PC-9 (cell line): ENCODE measurements at regions of chr15 and their contacts with region 1.

Region 1: GRCh38 chr15:57611938-57612337 is 20.2 kb downstream of the MYZAP start:
- DNase-seq: peak; percentile 81 to 87
- H3K4me3 ChIP-seq: no peak overlapping the region
- H3K27ac ChIP-seq: peak overlapping the region; percentile 85
- H3K4me1 ChIP-seq: peaks cover 36% of the 10 kb centered on the region
- H3K27me3 ChIP-seq: no peaks in the 10 kb centered on the region
- CTCF ChIP-seq: peak; percentile 68

Region 2: GRCh38 chr15:57340682-57341259 is 271.2 kb before region 1 on chr15:
- CTCF ChIA-PET with region 1: no interaction called
- POLR2A ChIA-PET with region 1: no interaction called
- intact Hi-C with region 1: loop called (anchors 5 kb)
- DNase-seq: peak; percentile 46 to 50
- H3K4me3 ChIP-seq: no peak overlapping the region
- H3K27ac ChIP-seq: no peak overlapping the region
- H3K4me1 ChIP-seq: no peaks in the 10 kb centered on the region
- H3K27me3 ChIP-seq: no peaks in the 10 kb centered on the region
- CTCF ChIP-seq: peak; percentile 87

Region 3: DNA sequence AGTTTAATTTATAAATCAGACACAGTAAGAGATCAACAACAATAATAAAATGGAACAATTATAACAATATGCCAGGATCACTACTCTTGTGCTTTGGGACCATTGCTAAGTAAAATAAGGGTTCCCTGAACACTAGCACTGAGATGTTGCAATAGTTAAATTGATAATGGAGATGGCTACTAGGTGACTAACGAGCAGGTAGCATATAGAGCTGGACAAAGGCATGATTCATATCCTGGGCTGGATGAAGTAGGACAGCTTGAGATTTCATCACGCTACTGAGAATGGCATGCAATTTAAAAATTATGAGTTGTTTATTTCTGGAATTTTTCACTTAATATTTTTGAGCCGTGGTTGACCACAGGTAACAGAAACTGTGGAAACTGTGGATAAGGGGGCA is 40.9 kb before region 1 on chr15:
- CTCF ChIA-PET with region 1: interaction called, 7 read pairs
- POLR2A ChIA-PET with region 1: no interaction called
- intact Hi-C with region 1: loop called (anchors 1 kb)
- DNase-seq: peak; percentile 23 to 90
- H3K4me3 ChIP-seq: no peak overlapping the region
- H3K27ac ChIP-seq: peak overlapping the region; percentile 97
- H3K4me1 ChIP-seq: peaks cover 26% of the 10 kb centered on the region
- H3K27me3 ChIP-seq: no peaks in the 10 kb centered on the region
- CTCF ChIP-seq: no peak

Region 4: GRCh38 chr15:57591646-57592367 is 20.1 kb before region 1 on chr15 and contains the start of gene MYZAP:
- CTCF ChIA-PET with region 1: no interaction called
- POLR2A ChIA-PET with region 1: interaction called, 4 read pairs
- intact Hi-C with region 1: loop called (anchors 1 kb)
- DNase-seq: peak; percentile 48 to 80
- H3K4me3 ChIP-seq: peak within 1 kb of the TSS; percentile 78
- H3K27ac ChIP-seq: peak within 1 kb of the TSS; percentile 90
- H3K4me1 ChIP-seq: peaks cover 72% of the 10 kb centered on the region
- H3K27me3 ChIP-seq: no peaks in the 10 kb centered on the region
- CTCF ChIP-seq: no peak
- total RNA-seq, gene MYZAP: 3.5 and 5.9 TPM in 2 replicates

Region 5: DNA sequence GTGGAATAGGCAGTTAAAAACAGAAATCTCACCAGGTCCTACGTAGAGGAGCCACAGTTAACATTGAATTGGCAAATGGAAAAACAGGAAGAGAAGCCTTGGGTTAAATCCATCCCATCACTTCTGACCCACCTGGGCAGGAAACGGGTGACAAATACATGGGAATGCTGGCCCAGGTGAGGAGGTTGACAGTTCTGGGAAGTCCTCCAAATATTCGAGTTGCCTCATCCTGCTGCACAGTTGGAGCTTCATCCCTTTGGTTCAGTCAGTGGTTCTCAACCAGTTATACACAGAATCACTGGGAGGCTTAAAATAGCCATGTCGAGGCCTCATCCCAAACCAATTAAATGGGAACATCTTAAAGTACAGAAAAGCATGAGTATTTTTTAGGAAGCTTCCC is 15.0 kb before region 1 on chr15:
- CTCF ChIA-PET with region 1: no interaction called
- POLR2A ChIA-PET with region 1: interaction called, 4 read pairs
- intact Hi-C with region 1: loop called (anchors 1 kb)
- DNase-seq: peak; percentile 31 to 46
- H3K4me3 ChIP-seq: no peak overlapping the region
- H3K27ac ChIP-seq: peak overlapping the region; percentile 19; the same call in 1 of the 2 replicates
- H3K4me1 ChIP-seq: peaks cover 50% of the 10 kb centered on the region
- H3K27me3 ChIP-seq: no peaks in the 10 kb centered on the region
- CTCF ChIP-seq: no peak